ENCODE measurements at regions of chr16 and their contacts with region 1.

Region 1: GRCh38 chr16:49855280-49855821 is 561 bp downstream of the ZNF423 start:
- DNase-seq: peak; percentile 73
- H3K4me3 ChIP-seq: peak overlapping the region; percentile 48 to 92 (median 49)
- H3K27ac ChIP-seq: peak overlapping the region; percentile 19
- H3K4me1 ChIP-seq: peaks cover 31% of the 10 kb centered on the region
- H3K27me3 ChIP-seq: peaks cover 34 to 54% of the 10 kb centered on the region in 2 experiments
- CTCF ChIP-seq: no peak
- POLR2A ChIP-seq: peak; percentile 73

Region 2: GRCh38 chr16:49407873-49408550 is 447.3 kb before region 1 on chr16:
- CTCF ChIA-PET with region 1: interaction called, 7 read pairs
- POLR2A ChIA-PET with region 1: no interaction called
- dilution Hi-C with region 1: no loop called
- intact Hi-C with region 1: loop called (anchors 1 kb)
- DNase-seq: peak; percentile 72
- H3K4me3 ChIP-seq: no peak overlapping the region
- H3K27ac ChIP-seq: no peak overlapping the region
- H3K4me1 ChIP-seq: no peaks in the 10 kb centered on the region
- H3K27me3 ChIP-seq: no peaks in the 10 kb centered on the region
- CTCF ChIP-seq: peak; percentile 71 to 81
- POLR2A ChIP-seq: no peak

Region 3: GRCh38 chr16:49556606-49557446 is 298.5 kb before region 1 on chr16:
- CTCF ChIA-PET with region 1: interaction called, 15 read pairs
- POLR2A ChIA-PET with region 1: no interaction called
- dilution Hi-C with region 1: no loop called
- intact Hi-C with region 1: loop called (anchors 1 kb)
- DNase-seq: peak; percentile 47
- H3K4me3 ChIP-seq: no peak overlapping the region
- H3K27ac ChIP-seq: no peak overlapping the region
- H3K4me1 ChIP-seq: no peaks in the 10 kb centered on the region
- H3K27me3 ChIP-seq: no peaks in the 10 kb centered on the region
- CTCF ChIP-seq: peak; percentile 24 to 47
- POLR2A ChIP-seq: no peak

Region 4: DNA sequence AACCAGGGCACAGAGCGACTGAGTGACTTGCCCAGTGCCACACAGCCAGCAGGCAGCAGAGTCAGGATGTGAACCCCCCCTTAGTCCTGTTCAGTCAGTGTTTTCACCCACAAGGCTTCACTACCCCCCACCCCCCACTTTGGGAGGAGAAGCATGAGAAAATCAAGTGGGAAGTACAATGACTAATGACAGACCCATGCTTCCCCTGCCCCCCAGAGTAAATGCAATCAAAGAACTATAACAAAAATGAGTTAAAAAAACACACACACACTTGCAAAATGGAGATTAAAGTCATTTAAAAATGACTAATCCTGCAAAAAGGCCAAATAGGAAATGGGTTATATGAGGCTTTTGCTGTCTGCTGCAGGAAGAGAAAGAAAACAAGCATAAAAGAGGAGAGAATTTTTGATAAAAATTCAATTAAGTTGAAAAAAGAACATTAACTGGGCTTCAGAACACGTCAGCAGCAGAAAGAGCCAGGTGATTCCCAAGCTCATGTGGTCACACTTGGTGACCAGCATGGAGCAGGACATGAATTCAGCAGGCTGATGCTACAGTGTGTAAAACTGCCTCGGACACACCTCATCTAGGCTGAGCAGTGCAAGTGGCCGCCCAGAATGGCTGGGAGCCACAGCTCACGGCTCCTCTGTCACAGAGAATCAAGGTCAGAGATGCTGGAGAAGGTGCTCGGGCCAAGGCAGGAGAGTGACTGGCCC is 211.8 kb before region 1 on chr16:
- CTCF ChIA-PET with region 1: interaction called, 3 read pairs
- POLR2A ChIA-PET with region 1: no interaction called
- dilution Hi-C with region 1: no loop called
- intact Hi-C with region 1: loop called (anchors 1 kb)
- DNase-seq: peak; percentile 90
- H3K4me3 ChIP-seq: no peak overlapping the region
- H3K27ac ChIP-seq: peak overlapping the region; percentile 59
- H3K4me1 ChIP-seq: peaks cover 25% of the 10 kb centered on the region
- H3K27me3 ChIP-seq: no peaks in the 10 kb centered on the region
- CTCF ChIP-seq: no peak
- POLR2A ChIP-seq: no peak

Region 5: GRCh38 chr16:49763826-49764225 is 91.5 kb before region 1 on chr16:
- CTCF ChIA-PET with region 1: no interaction called
- POLR2A ChIA-PET with region 1: no interaction called
- dilution Hi-C with region 1: no loop called
- intact Hi-C with region 1: no loop called
- DNase-seq: peak; percentile 20
- H3K4me3 ChIP-seq: no peak overlapping the region
- H3K27ac ChIP-seq: no peak overlapping the region
- H3K4me1 ChIP-seq: no peaks in the 10 kb centered on the region
- H3K27me3 ChIP-seq: no peaks in the 10 kb centered on the region
- CTCF ChIP-seq: no peak
- POLR2A ChIP-seq: no peak

Region 6: GRCh38 chr16:49776085-49776595 is 79.2 kb before region 1 on chr16:
- CTCF ChIA-PET with region 1: interaction called, 5 read pairs
- POLR2A ChIA-PET with region 1: no interaction called
- dilution Hi-C with region 1: no loop called
- intact Hi-C with region 1: loop called (anchors 2 kb)
- DNase-seq: peak; percentile 67
- H3K4me3 ChIP-seq: no peak overlapping the region
- H3K27ac ChIP-seq: no peak overlapping the region
- H3K4me1 ChIP-seq: peaks cover 2% of the 10 kb centered on the region
- H3K27me3 ChIP-seq: no peaks in the 10 kb centered on the region
- CTCF ChIP-seq: peak in 1 of 2 donors; percentile 3
- POLR2A ChIP-seq: no peak

Region 7: DNA sequence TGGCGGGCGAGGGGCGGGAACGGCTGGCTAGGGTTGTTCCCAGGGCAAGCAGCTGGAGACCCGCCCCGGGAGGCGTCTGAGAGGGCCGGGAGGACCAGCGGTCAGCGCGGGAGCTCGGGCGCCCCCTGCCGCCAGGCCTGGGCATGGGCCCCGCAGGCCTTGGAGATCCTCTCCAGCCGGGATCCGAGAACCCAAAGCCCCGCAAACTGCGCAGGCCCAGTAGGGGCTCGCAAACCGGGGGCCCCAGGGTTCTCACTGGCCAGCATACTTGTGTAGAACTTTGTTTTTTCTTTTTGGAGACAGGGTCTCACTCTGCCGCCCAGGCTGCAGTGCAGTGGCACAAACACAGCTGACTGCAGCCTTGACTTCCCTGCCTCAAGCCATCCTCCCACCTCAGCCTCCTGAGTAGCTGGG is 21.4 kb after region 1 on chr16:
- CTCF ChIA-PET with region 1: interaction called, 44 read pairs
- POLR2A ChIA-PET with region 1: no interaction called
- dilution Hi-C with region 1: no loop called
- intact Hi-C with region 1: loop called (anchors 2 kb)
- DNase-seq: peak; percentile 25
- H3K4me3 ChIP-seq: no peak overlapping the region
- H3K27ac ChIP-seq: no peak overlapping the region
- H3K4me1 ChIP-seq: no peaks in the 10 kb centered on the region
- H3K27me3 ChIP-seq: peaks cover 4 to 8% of the 10 kb centered on the region in 2 experiments
- CTCF ChIP-seq: peak; percentile 88 to 94
- POLR2A ChIP-seq: no peak